Panc1 (cell line): ENCODE measurements at regions of chr19 and their contacts with region 1.

Region 1: DNA sequence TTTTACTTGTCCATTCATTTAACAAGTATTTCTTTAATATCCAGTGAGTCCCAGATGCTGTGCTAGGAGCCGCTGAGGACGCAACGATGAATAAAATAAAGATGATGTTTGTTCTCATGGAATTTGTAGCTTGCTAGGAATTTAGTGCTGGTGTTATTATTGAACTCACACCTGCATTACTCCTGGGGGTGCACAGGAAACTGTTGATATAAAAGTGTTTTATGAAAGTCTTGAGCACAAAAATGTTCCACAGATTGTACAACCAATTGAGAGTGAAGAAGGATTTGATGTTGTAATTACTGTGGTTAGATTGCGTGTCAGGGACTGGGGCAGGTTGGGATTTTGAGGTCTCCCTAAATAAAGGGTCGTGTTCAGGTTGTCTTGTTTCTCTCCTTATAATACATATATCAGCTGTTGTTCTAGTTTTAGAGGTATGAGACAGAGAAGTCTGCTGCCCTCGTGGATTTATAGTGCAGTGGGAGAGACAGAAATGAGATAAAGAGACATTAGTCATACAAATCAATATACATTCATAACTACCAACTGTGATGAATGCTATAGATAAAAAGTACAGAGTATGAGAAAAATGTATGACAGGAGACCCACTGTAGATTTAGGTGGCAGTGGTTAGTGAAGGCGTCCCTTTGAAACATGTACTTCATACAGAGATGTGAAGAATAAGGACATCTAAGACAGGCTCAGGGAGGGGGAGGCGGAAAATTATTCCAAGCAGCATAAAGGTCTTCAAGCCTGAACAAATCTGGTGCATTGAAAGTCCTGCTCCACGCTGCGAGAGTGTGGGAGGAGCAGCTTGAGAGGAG is 11.3 kb downstream of the CACNG6 start:
- DNase-seq: no peak
- ATAC-seq: peak; percentile 88
- H3K4me3 ChIP-seq: peak overlapping the region in 1 of 2 experiments; percentile 5; a peak in 1 of 4 replicates
- H3K27ac ChIP-seq: peak overlapping the region; percentile 94
- H3K4me1 ChIP-seq: peaks cover 50% of the 10 kb centered on the region
- H3K27me3 ChIP-seq: no peaks in the 10 kb centered on the region
- CTCF ChIP-seq: no peak

Region 2: GRCh38 chr19:53624762-53625540 is 377.8 kb before region 1 on chr19:
- CTCF ChIA-PET with region 1: no interaction called
- POLR2A ChIA-PET with region 1: interaction called, 13 read pairs
- in situ Hi-C with region 1: no loop called
- intact Hi-C with region 1: no loop called
- DNase-seq: no peak
- ATAC-seq: no peak
- H3K4me3 ChIP-seq: no peak overlapping the region
- H3K27ac ChIP-seq: no peak overlapping the region
- H3K4me1 ChIP-seq: 0 out of 2 replicates have a peak, but pooled peaks cover 6% of the 10 kb centered on the region
- H3K27me3 ChIP-seq: no peaks in the 10 kb centered on the region
- CTCF ChIP-seq: no peak

Region 3: GRCh38 chr19:53927739-53928138 is 75.0 kb before region 1 on chr19:
- CTCF ChIA-PET with region 1: no interaction called
- POLR2A ChIA-PET with region 1: no interaction called
- in situ Hi-C with region 1: no loop called
- intact Hi-C with region 1: no loop called
- DNase-seq: no peak
- ATAC-seq: peak; percentile 78
- H3K4me3 ChIP-seq: no peak overlapping the region
- H3K27ac ChIP-seq: no peak overlapping the region
- H3K4me1 ChIP-seq: no peaks in the 10 kb centered on the region
- H3K27me3 ChIP-seq: no peaks in the 10 kb centered on the region
- CTCF ChIP-seq: no peak

Region 4: DNA sequence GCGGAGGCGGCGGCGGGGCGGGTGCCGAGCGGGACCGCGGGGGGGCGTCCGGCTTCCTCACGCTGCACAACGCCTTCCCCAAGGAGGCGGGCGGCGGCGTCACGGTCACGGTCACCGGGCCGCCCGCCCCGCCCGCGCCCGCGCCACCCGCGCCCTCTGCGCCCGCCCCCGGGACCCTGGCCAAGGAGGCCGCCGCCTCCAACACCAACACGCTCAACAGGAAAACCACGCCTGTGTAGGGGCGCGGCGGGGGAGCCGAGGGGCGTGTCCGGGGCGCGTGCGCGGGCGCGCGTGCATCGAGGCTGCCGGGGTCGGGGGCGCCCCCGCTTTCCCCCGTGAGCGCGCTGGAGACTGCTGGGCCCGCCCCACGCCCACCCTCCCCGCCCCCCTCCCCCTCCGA is 20.1 kb before region 1 on chr19:
- CTCF ChIA-PET with region 1: no interaction called
- POLR2A ChIA-PET with region 1: interaction called, 10 read pairs
- in situ Hi-C with region 1: no loop called
- intact Hi-C with region 1: no loop called
- DNase-seq: no peak
- ATAC-seq: no peak
- H3K4me3 ChIP-seq: 0 out of 4 replicates have a peak overlapping the region, but pooled peaks of 1 of the 2 experiments have one; percentile 8
- H3K27ac ChIP-seq: no peak overlapping the region
- H3K4me1 ChIP-seq: peaks cover 29% of the 10 kb centered on the region
- H3K27me3 ChIP-seq: no peaks in the 10 kb centered on the region
- CTCF ChIP-seq: no peak

Region 5: DNA sequence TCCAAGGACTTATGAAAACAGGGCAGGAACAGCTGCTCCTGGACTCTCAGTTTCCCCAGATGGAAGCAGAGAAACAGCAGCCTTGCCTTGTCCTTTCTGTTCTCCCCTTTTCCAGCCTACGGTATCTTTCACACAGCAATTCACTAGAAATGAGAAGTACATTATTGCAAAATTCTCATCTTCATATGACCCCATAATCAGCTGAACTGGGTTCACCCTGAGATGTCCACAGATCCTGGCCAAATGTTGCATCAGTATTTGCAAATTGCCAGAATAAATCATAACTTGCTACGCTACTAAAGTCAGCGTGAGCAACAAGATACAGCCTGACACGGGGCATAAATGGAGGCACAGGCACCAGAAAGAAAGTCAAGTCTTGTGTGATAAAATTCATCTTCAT is 44.9 kb after region 1 on chr19:
- CTCF ChIA-PET with region 1: no interaction called
- POLR2A ChIA-PET with region 1: no interaction called
- in situ Hi-C with region 1: no loop called
- intact Hi-C with region 1: no loop called
- DNase-seq: no peak
- ATAC-seq: no peak
- H3K4me3 ChIP-seq: no peak overlapping the region
- H3K27ac ChIP-seq: no peak overlapping the region
- H3K4me1 ChIP-seq: no peaks in the 10 kb centered on the region
- H3K27me3 ChIP-seq: no peaks in the 10 kb centered on the region
- CTCF ChIP-seq: no peak